Transverse colon (tissue), 4 donors: ENCODE measurements at regions of chr10 and their contacts with region 1.

Region 1: GRCh38 chr10:21749788-21750187 is 215.8 kb downstream of the MLLT10 start:
- DNase-seq: no peak
- H3K4me3 ChIP-seq: no peak overlapping the region
- H3K27ac ChIP-seq: no peak overlapping the region
- H3K4me1 ChIP-seq: peaks cover 0 to 4% (median 2%) of the 10 kb centered on the region in 4 donors
- H3K27me3 ChIP-seq: no peaks in the 10 kb centered on the region
- CTCF ChIP-seq: no peak
- EP300 ChIP-seq: no peak
- POLR2A ChIP-seq: no peak

Region 2: DNA sequence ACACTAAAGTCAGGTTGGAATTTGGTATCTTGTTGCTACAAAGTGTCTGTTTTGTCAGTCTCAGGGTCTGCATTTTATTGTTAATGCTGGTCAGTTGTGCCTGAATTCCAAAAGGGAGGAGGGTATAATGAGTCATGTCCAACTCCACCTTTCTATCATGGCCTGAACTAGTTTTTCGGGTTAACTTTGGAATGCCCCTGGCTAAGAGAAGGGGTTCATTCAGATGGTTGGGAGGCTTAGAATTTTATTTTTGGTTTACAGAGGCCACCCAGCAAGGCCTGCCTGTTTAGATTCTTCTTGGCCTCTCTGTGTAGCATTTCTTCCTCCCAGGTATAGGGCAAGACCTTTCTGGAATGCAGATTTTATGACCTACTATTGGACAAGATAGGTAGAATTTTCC is 317.5 kb before region 1 on chr10:
- in situ Hi-C with region 1: no loop called
- intact Hi-C with region 1: no loop called
- DNase-seq: no peak
- H3K4me3 ChIP-seq: no peak overlapping the region
- H3K27ac ChIP-seq: no peak overlapping the region
- H3K4me1 ChIP-seq: no peaks in the 10 kb centered on the region
- H3K27me3 ChIP-seq: no peaks in the 10 kb centered on the region
- CTCF ChIP-seq: no peak
- EP300 ChIP-seq: no peak
- POLR2A ChIP-seq: no peak

Region 3: GRCh38 chr10:21776883-21777282 is 27.1 kb after region 1 on chr10:
- in situ Hi-C with region 1: no loop called
- intact Hi-C with region 1: loop called (anchors 1 kb)
- DNase-seq: no peak
- H3K4me3 ChIP-seq: no peak overlapping the region
- H3K27ac ChIP-seq: no peak overlapping the region
- H3K4me1 ChIP-seq: no peaks in the 10 kb centered on the region
- H3K27me3 ChIP-seq: no peaks in the 10 kb centered on the region
- CTCF ChIP-seq: no peak
- EP300 ChIP-seq: no peak
- POLR2A ChIP-seq: no peak